ENCODE measurements at regions of chr19 and their contacts with region 1.

Region 1: DNA sequence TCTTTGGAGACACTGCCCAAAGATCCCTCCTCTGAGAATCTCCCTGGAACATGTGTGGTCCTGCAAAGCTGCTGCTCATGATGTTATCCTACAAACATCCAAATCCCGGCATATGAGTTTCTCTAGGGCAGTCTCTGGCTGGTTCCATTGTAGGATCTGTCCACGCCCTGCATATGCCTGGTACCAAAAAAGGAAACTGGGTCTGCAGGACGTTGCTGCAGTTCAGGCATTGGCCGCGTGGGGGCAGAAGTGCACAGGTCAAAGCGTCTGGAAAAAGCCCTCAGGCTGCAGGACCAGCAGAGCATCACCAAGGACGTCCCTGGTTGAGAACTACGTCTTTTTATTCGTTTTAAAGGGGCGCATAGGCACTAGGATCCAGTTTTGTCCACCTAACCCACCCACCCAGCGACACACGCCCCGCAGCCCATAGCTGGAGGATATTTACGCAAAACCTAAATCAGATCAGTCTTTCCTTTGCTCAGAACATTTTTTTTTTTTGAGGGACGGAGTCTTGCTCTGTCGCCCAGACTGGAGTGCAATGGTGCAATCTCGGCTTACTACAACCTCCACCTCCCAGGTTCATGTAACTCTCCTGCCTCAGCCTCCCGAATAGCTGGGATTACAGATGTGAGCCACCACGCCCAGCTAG is 12.9 kb upstream of the ZNF564 start:
- DNase-seq: peak; percentile 82 to 92 (median 88)
- ATAC-seq: peak; percentile 68 to 95 (median 93)
- H3K4me3 ChIP-seq: no peak overlapping the region
- H3K27ac ChIP-seq: peak overlapping the region in 1 of 12 donors; percentile 38
- H3K4me1 ChIP-seq: peaks cover 0 to 7% (median 0%) of the 10 kb centered on the region in 12 donors
- H3K27me3 ChIP-seq: no peaks in the 10 kb centered on the region
- CTCF ChIP-seq: peak; percentile 90 to 98 (median 96)
- POLR2A ChIP-seq: no peak

Region 2: GRCh38 chr19:12666265-12667048 is 102.3 kb after region 1 on chr19 and contains the starts of genes MAN2B1 and WDR83:
- intact Hi-C with region 1: loop called in 6 of 10 experiments (anchors 5 kb)
- DNase-seq: peak; percentile 77 to 88 (median 82)
- ATAC-seq: peak; percentile 60 to 89 (median 88)
- H3K4me3 ChIP-seq: peak within 1 kb of the TSS; percentile 55 to 97 (median 88)
- H3K27ac ChIP-seq: peak within 1 kb of the TSS in 11 of 12 donors; percentile 45 to 90 (median 77)
- H3K4me1 ChIP-seq: peaks cover 9 to 51% (median 38%) of the 10 kb centered on the region in 12 donors
- H3K27me3 ChIP-seq: no peaks in the 10 kb centered on the region
- CTCF ChIP-seq: no peak
- POLR2A ChIP-seq: peak in 1 of 2 donors; percentile 45
- total RNA-seq, gene MAN2B1: 16.0 to 135 (median 30.7) TPM
- total RNA-seq, gene WDR83: 6.0 to 9.2 (median 7.8) TPM

Region 3: GRCh38 chr19:12672744-12673143 is 108.6 kb after region 1 on chr19:
- intact Hi-C with region 1: loop called (anchors 1 to 5 kb)
- DNase-seq: no peak
- ATAC-seq: no peak
- H3K4me3 ChIP-seq: no peak overlapping the region
- H3K27ac ChIP-seq: no peak overlapping the region
- H3K4me1 ChIP-seq: peaks cover 9 to 28% (median 21%) of the 10 kb centered on the region in 12 donors
- H3K27me3 ChIP-seq: no peaks in the 10 kb centered on the region
- CTCF ChIP-seq: no peak
- POLR2A ChIP-seq: no peak

Region 4: GRCh38 chr19:12681074-12681951 is 117.2 kb after region 1 on chr19 and contains the start of gene DHPS:
- intact Hi-C with region 1: loop called in 2 of 10 experiments (anchors 5 kb)
- DNase-seq: peak; percentile 90 to 96 (median 95)
- ATAC-seq: peak; percentile 89 to 95 (median 90)
- H3K4me3 ChIP-seq: peak within 1 kb of the TSS; percentile 55 to 99 (median 90)
- H3K27ac ChIP-seq: peak within 1 kb of the TSS; percentile 80 to 100 (median 95)
- H3K4me1 ChIP-seq: peaks cover 0 to 21% (median 8%) of the 10 kb centered on the region in 12 donors
- H3K27me3 ChIP-seq: no peaks in the 10 kb centered on the region
- CTCF ChIP-seq: peak in 1 of 12 donors; percentile 20
- POLR2A ChIP-seq: peak in 1 of 2 donors; percentile 27
- total RNA-seq, gene DHPS: 47.6 to 121 (median 54.6) TPM